Prostate gland (tissue), 2 donors: ENCODE measurements at regions of chr2 and their contacts with region 1.

Region 1: GRCh38 chr2:100242891-100243619 is 79.2 kb downstream of the LONRF2 start:
- DNase-seq: peak; percentile 60
- H3K4me3 ChIP-seq: no peak overlapping the region
- H3K27ac ChIP-seq: peak overlapping the region in 1 of 2 donors; percentile 15
- H3K4me1 ChIP-seq: no peaks in the 10 kb centered on the region
- H3K27me3 ChIP-seq: no peaks in the 10 kb centered on the region
- CTCF ChIP-seq: peak in 3 of 4 experiments; percentile 56 to 83 (median 69)
- POLR2A ChIP-seq: no peak

Region 2: DNA sequence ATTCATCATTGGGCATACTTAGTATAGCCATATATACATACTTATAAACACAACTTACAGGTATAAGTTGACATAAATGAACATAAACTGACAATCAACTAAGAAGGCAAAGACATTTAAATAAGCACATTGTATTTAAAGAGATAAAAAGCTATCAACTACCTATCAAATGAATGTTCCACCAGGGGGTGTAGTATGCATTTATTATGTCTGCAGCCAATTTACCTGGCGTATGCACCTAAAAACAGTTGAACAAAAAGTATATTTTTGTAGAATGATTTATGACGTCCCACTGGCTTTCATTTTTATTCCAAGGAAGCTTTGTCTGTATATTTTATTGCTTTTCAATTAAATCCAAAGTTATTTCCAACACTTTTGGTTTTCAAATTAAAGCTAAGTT is 424.2 kb before region 1 on chr2:
- intact Hi-C with region 1: loop called (anchors 10 kb)
- DNase-seq: no peak
- H3K4me3 ChIP-seq: no peak overlapping the region
- H3K27ac ChIP-seq: no peak overlapping the region
- H3K4me1 ChIP-seq: no peaks in the 10 kb centered on the region
- H3K27me3 ChIP-seq: no peaks in the 10 kb centered on the region
- CTCF ChIP-seq: peak in 2 of 4 experiments; percentile 55 to 60
- POLR2A ChIP-seq: no peak